ENCODE measurements at regions of chr17 and their contacts with region 1.

Region 1: DNA sequence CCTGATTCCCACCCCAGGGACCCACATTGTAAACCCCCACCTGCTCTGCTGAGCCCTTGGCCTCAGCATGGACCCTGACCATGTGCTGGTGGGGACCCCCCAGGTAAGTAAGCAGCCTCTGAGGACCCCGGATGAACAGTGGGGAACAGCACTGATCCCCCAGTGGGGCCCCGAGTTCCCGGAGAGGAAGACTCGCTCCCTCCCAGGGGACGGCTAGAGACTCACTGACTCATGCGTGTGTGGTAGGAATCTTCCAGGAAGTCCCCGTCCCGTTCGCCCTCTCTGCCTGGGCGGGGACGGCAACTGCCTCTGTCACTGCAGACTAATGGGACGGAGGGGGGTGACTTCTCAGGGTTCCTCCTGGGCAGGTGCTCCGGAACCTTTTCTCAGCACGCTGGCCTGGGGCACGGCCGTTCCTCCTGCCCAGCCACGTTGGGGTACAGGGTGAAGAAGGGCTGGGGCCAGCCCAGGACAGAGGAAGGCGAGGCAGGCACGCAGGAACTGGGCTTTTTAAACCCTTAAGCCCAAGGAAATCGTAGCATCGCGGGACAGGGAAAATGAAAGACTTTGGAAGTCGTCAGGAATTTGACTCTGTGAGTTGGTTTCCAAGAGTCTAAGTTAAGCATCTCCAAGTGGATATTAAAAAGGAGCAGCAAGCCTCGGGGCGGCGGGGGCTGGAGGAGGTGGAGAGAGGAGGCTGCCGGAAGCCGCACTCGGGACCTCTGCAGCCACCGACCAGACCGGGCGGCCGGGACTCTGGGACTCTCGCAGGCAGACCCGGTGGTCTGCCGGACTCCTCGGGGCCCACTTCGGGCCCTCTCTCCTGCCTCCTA is 178.7 kb downstream of the SEC14L1 start:
- DNase-seq: peak; percentile 68
- ATAC-seq: peak; percentile 41
- H3K4me3 Mint-ChIP-seq: peak overlapping the region; percentile 92
- H3K27ac Mint-ChIP-seq: peak overlapping the region; percentile 89
- H3K4me1 Mint-ChIP-seq: peaks cover 76% of the 10 kb centered on the region
- H3K27me3 Mint-ChIP-seq: no peaks in the 10 kb centered on the region
- CTCF ChIP-seq: no peak

Region 2: GRCh38 chr17:76737082-76737675 is 582.2 kb before region 1 on chr17 and contains the start of gene SRSF2:
- CTCF ChIA-PET with region 1: no interaction called
- POLR2A ChIA-PET with region 1: interaction called, 3 read pairs
- intact Hi-C with region 1: loop called (anchors 5 kb)
- DNase-seq: peak; percentile 99
- ATAC-seq: peak; percentile 74
- H3K4me3 Mint-ChIP-seq: peak within 1 kb of the TSS; percentile 97
- H3K27ac Mint-ChIP-seq: peak within 1 kb of the TSS; percentile 96
- H3K4me1 Mint-ChIP-seq: peaks cover 50% of the 10 kb centered on the region
- H3K27me3 Mint-ChIP-seq: no peaks in the 10 kb centered on the region
- CTCF ChIP-seq: no peak
- total RNA-seq, gene SRSF2: 335 and 367 TPM in 2 replicates

Region 3: GRCh38 chr17:77304051-77304745 is 15.2 kb before region 1 on chr17:
- CTCF ChIA-PET with region 1: no interaction called
- POLR2A ChIA-PET with region 1: interaction called, 14 read pairs
- intact Hi-C with region 1: loop called (anchors 2 kb)
- DNase-seq: no peak
- ATAC-seq: no peak
- H3K4me3 Mint-ChIP-seq: no peak overlapping the region
- H3K27ac Mint-ChIP-seq: no peak overlapping the region
- H3K4me1 Mint-ChIP-seq: peaks cover 9% of the 10 kb centered on the region
- H3K27me3 Mint-ChIP-seq: peaks cover 5% of the 10 kb centered on the region
- CTCF ChIP-seq: no peak

Region 4: DNA sequence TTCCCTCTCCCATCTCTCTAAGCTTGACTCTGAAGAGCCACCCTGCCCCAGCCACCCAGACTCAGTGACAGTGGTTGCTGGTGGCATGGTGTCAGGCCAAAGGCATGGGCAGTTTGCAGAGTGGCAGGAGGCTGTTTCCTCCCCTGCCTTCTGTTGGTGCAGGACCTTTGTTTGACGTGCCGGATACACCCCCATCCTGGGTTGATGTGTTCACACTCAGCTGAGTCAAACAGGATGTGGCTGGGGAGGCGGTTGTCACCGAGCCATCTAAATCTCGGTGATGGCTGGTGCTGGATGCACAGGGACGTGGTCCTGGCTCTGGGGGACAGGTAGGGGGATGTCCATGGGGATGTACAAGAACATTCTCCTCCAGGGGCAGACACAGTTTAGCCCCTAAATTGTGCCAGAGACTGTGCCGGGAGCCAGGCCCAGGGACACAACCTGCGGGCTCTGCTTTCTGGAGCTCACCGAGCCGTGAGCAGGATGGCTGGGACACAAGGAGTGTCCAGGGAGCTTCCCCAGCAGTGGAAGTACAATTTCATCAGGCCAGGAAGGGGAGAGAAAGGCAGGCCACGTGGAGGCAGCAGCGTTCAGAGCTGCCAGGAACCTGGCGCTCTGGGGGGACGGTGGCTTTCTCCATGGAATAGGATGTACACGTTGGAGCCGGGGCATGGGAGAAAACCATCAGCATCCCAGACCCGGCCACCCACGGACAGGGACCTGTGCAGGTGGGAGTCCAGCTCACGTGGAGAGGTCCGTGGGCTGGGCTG is 85.6 kb after region 1 on chr17:
- CTCF ChIA-PET with region 1: interaction called, 3 read pairs
- POLR2A ChIA-PET with region 1: interaction called, 37 read pairs
- intact Hi-C with region 1: no loop called
- DNase-seq: peak; percentile 60
- ATAC-seq: peak; percentile 70
- H3K4me3 Mint-ChIP-seq: peak overlapping the region; percentile 89
- H3K27ac Mint-ChIP-seq: peak overlapping the region; percentile 96
- H3K4me1 Mint-ChIP-seq: peaks cover 94% of the 10 kb centered on the region
- H3K27me3 Mint-ChIP-seq: no peaks in the 10 kb centered on the region
- CTCF ChIP-seq: no peak

Region 5: GRCh38 chr17:77444984-77445759 is 125.7 kb after region 1 on chr17:
- CTCF ChIA-PET with region 1: interaction called, 3 read pairs
- POLR2A ChIA-PET with region 1: interaction called, 87 read pairs
- intact Hi-C with region 1: loop called (anchors 1 kb)
- DNase-seq: peak; percentile 70
- ATAC-seq: peak; percentile 45
- H3K4me3 Mint-ChIP-seq: peak overlapping the region; percentile 80
- H3K27ac Mint-ChIP-seq: peak overlapping the region; percentile 94
- H3K4me1 Mint-ChIP-seq: peaks cover 96% of the 10 kb centered on the region
- H3K27me3 Mint-ChIP-seq: no peaks in the 10 kb centered on the region
- CTCF ChIP-seq: no peak

Region 6: DNA sequence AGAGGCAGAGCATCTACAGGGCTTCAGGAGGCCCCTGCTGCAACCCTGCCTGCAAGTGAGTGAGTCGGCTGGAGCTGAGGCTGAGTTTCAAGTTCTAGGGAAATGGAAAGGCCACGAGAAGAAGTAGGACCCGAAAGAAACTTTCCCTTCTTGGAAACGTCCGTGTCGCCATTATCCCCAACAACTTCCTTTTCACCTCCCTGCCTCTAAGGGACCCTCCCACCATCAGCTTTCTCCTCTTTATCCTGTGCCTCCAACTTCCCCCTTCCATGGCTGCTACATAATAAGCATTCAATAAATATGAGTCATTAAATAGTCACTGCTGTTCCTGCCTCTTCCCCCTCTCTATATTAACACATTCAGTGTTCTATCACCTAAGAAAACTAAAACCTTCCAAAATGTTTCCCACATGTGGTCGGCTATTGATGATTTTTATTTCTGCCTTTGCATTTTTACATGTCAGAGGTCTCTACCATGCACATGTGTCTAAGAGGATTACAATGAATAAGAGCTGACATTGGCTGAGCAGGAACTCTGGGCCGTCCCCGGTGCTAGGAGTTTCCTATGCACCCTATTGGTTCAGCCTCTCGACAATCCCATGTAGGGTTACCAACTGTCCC is 523.2 kb after region 1 on chr17:
- CTCF ChIA-PET with region 1: no interaction called
- POLR2A ChIA-PET with region 1: no interaction called
- intact Hi-C with region 1: no loop called
- DNase-seq: no peak
- ATAC-seq: no peak
- H3K4me3 Mint-ChIP-seq: peak overlapping the region; percentile 24
- H3K27ac Mint-ChIP-seq: no peak overlapping the region
- H3K4me1 Mint-ChIP-seq: peaks cover 54% of the 10 kb centered on the region
- H3K27me3 Mint-ChIP-seq: peaks cover 61% of the 10 kb centered on the region
- CTCF ChIP-seq: no peak

Region 7: DNA sequence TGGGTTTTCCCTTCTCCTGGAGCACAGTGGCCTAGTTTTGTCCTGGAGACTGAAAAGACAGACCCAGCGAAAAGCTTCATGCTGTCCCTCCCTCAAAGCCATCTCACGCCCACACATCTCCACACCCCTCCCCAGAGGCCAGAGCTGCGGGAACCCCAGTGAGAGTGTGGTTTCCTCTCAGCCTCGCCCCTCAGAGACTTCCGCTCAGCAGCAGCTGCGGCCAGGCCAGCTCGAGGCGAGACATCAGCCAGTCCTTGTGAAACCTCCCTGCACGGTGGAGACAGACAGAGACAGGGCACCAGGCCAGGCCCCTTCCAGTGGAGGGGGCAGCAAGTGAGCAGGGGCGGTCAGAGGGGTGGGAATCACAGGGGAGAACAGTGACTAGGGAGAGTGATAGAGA is 562.1 kb after region 1 on chr17:
- CTCF ChIA-PET with region 1: no interaction called
- POLR2A ChIA-PET with region 1: interaction called, 3 read pairs
- intact Hi-C with region 1: loop called (anchors 10 kb)
- DNase-seq: peak; percentile 82
- ATAC-seq: peak; percentile 86
- H3K4me3 Mint-ChIP-seq: peak overlapping the region; percentile 76
- H3K27ac Mint-ChIP-seq: peak overlapping the region; percentile 86
- H3K4me1 Mint-ChIP-seq: peaks cover 82% of the 10 kb centered on the region
- H3K27me3 Mint-ChIP-seq: peaks cover 6% of the 10 kb centered on the region
- CTCF ChIP-seq: no peak

Measured in activated B cell treated with CpG ODN at 0.5 μM for 24 hours (primary cell).